ENCODE measurements at regions of chr6 and their contacts with region 1.

Region 1: DNA sequence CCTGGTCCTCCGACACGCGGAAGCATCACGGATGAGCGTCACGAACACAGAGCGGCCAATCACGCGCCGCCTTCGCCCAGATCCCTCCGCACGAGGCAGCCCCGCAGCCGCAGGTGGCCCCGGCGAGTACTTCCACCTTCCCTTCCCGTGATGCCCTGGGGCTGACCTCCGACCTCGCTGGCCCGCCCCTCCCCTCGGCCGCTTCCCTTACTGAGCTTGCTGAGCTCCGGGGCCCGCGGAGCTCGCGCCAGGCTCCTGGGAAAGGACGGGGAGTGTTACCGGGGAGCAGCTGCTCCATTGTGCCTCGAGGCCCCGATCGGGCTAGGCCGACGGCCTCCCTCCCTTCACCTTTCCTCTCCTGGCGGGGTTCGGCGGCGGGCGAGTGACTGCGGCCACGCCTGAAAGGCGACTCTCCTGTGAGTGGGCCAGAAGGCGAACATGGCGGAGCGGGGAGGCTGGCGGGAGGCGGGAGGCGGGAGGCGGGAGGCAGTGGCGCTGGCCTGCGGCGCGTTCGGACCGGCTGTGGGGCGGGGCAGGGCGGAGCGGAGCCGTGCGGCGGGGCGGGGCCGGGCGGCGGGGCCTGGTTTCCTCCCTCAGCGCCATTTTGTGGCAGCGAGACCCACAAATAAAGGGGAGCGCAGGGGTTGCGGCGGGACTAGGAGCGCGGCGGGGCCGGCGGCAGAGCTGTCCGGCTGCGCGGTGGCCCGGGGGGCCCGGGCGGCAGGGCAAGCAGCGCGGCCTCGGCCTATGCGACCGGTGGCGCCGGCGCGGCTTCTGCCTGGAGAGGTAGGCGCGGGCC is at the start of gene WTAP:
- DNase-seq: peak; percentile 97
- H3K4me3 ChIP-seq: peak within 1 kb of the TSS; percentile 88 to 96 (median 93)
- H3K27ac ChIP-seq: peak within 1 kb of the TSS; percentile 100
- H3K4me1 ChIP-seq: peaks cover 0 to 4% of the 10 kb centered on the region in 2 donors
- H3K27me3 ChIP-seq: no peaks in the 10 kb centered on the region
- CTCF ChIP-seq: peak in 1 of 3 donors; percentile 13
- POLR2A ChIP-seq: peak; percentile 59
- total RNA-seq, gene WTAP: 115 to 153 (median 116) TPM

Region 2: DNA sequence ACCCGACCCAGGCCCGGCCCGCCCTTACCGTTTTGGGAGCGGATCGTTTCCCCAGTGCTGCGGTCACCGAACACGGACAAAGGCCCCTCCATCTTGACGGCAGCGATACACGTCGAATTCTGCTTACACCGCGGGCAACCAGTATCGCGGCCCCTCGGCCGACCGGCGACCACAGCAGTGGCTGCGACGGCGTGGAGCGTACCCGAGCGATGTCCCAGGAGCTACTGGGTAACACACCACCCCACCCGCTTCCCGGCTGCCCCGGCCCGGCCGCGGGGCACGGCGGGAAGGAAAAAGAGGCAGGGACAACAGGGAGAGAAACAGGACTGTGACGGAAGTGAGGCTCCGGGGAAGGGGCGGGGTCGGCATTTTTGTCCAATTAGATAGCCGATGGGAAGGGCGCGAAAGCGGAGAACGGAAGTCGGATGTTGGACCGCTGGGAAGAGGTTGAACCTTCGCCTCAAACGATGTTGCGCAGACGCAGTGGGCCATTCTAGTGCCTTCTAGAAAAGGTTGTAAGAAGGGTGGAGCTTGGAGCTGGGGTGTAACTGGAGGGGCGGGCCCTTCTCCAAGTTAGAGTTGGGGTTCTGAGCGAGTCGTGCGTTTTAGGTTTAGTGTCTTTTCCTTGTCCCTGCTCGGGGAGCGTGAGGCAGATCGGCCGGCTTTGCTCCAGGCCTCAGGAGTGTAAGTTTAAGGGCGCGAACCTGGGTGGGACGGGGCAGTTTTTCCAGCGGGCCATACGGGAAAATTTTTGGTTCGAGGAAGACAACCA is 62.4 kb after region 1 on chr6 and contains the start of gene TCP1:
- intact Hi-C with region 1: loop called (anchors 2 kb)
- DNase-seq: peak; percentile 99
- H3K4me3 ChIP-seq: peak within 1 kb of the TSS; percentile 86 to 99 (median 92)
- H3K27ac ChIP-seq: peak within 1 kb of the TSS; percentile 94 to 97
- H3K4me1 ChIP-seq: peaks cover 4 to 19% of the 10 kb centered on the region in 2 donors
- H3K27me3 ChIP-seq: no peaks in the 10 kb centered on the region
- CTCF ChIP-seq: no peak
- POLR2A ChIP-seq: peak; percentile 91
- total RNA-seq, gene TCP1: 119 to 151 (median 137) TPM

Measured in breast epithelium (tissue), 4 donors.